Activated B cell treated with CpG ODN at 0.5 μM for 24 hours (primary cell): ENCODE measurements at regions of chr3 and their contacts with region 1.

Region 1: GRCh38 chr3:143535994-143536784 is 312.1 kb downstream of the SLC9A9 start:
- DNase-seq: no peak
- ATAC-seq: peak; percentile 68
- H3K4me3 Mint-ChIP-seq: peak overlapping the region; percentile 64
- H3K27ac Mint-ChIP-seq: peak overlapping the region; percentile 79
- H3K4me1 Mint-ChIP-seq: peaks cover 61% of the 10 kb centered on the region
- H3K27me3 Mint-ChIP-seq: no peaks in the 10 kb centered on the region
- CTCF ChIP-seq: no peak

Region 2: DNA sequence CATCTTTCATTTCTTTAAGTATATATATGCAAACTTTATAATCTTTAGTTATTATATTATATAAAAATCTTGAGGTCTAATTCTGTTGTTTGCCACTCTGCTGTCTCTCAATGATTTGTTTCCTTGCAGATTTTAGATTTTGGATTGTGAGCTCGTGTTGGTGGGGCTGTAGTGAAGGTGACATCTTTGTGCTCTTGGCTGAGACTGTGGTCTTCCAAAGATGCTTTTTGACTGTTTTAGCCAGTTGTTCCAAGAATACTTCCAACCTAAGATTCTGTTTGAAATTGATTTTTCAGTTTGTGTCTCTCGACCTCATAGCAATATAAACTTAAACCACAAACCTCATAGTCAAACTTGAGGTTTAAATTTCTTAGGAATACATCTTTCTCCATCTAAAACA is 14.4 kb before region 1 on chr3:
- CTCF ChIA-PET with region 1: interaction called, 4 read pairs
- POLR2A ChIA-PET with region 1: interaction called, 3 read pairs
- intact Hi-C with region 1: loop called (anchors 2 kb)
- DNase-seq: no peak
- ATAC-seq: no peak
- H3K4me3 Mint-ChIP-seq: no peak overlapping the region
- H3K27ac Mint-ChIP-seq: no peak overlapping the region
- H3K4me1 Mint-ChIP-seq: peaks cover 30% of the 10 kb centered on the region
- H3K27me3 Mint-ChIP-seq: no peaks in the 10 kb centered on the region
- CTCF ChIP-seq: no peak